GM10248 (cell line): ENCODE measurements at regions of chr3 and their contacts with region 1.

Region 1: GRCh38 chr3:111717601-111718000 is 122.5 kb upstream of the ZBED2 start:
- DNase-seq: peak; percentile 73
- CTCF ChIP-seq: peak; percentile 91

Region 2: GRCh38 chr3:111326144-111326995 is 391.2 kb before region 1 on chr3:
- CTCF ChIA-PET with region 1: no interaction called
- POLR2A ChIA-PET with region 1: no interaction called
- DNase-seq: no peak
- CTCF ChIP-seq: no peak

Region 3: DNA sequence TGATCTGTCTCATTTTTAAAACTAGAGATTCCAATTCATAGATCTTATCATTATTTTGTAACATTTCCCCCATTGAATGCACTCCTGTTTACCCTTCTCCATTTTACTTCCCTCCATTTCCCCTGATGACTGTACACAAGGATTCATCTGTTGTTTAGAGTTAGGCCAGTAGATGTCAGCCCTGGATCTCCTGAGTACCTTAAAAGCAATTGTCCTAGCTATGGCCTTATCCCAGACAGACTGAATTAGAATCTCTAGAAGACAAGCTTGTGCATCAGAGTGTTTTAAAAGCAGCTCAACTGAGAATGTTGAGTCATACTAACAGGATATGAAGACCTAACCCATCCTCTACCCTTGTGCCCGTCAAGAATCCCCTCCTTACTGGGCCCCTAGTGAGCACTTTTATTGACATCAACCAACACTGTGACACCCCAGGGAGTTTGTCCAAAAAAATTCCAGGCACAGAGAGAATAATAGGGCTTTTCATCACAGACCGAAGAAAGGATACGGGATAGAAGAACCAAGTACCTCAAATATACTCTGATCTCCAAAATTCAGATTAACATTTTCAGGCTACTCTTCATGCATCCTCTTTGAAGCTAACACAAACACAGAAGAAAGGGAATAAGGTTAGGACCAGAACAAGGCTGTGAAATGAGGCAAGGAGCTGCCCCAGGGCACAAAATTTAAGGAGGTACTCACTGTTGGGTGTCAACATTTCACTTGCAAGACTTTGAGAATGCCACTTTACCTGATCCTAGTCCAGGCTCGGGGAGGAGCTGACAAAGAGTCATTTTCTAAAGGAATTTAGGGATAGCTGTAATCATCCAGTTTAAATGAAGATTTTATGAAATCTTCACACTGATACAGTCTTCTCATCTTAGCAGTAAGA is 139.6 kb before region 1 on chr3:
- CTCF ChIA-PET with region 1: interaction called, 16 read pairs
- POLR2A ChIA-PET with region 1: no interaction called
- DNase-seq: peak; percentile 28
- CTCF ChIP-seq: peak; percentile 45

Region 4: DNA sequence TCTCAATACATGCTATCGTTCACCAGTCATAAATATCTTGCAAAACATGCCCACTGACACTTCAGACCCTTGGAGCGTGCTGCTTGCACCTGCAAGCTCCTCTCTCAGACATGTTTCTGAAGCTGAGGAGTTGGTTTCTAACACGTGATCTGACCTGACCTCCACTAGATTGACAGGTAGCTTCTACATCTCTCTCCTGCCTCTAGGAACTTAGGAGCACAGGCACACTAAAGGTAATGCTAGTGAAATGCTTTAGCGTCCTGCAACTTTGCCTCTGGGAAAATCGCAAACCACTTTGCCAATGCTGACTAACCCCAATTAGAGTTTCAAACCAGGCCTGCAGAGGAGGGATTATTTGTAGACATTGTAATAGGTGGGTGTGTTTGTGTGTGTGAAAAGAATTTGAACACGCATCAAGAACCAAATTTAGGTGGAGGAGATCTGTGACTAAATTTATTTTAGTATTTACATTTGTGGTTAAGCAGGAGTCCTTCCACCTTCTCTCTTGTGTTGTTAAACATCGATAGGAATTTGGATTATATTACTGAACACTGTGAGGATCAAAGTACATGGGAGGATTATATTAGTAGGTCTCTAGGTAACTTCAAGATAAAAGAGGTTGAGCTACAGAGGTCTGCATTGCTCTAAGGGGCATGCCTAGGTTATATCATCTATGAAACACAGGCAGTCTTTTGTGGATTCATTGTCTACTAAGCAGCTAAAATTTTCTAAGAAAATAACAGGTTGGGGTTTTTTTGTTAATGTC is 35.8 kb before region 1 on chr3:
- CTCF ChIA-PET with region 1: interaction called, 15 read pairs
- POLR2A ChIA-PET with region 1: no interaction called
- DNase-seq: no peak
- CTCF ChIP-seq: no peak

Region 5: DNA sequence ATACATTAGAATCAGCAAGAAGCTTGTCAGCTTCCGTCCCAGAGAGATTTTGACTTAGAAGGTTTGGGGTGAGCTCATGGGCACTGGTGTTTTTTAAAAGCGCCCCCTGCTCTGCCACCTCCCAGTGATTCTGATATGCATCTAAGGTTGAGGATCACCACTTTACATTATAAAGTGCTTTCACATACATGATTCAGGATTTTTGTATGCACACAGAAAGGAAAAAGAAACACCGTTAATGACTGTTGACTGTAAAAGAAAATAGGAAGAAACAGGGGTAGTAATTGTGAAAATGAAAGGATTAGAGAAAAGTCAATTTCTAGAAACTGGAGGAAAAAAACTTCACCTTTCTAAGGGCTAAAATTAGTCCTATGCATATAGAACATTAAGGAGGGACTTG is 17.5 kb before region 1 on chr3:
- CTCF ChIA-PET with region 1: interaction called, 79 read pairs
- POLR2A ChIA-PET with region 1: no interaction called
- DNase-seq: no peak
- CTCF ChIP-seq: no peak

Region 6: GRCh38 chr3:111745786-111746185 is 28.2 kb after region 1 on chr3:
- CTCF ChIA-PET with region 1: interaction called, 23 read pairs
- POLR2A ChIA-PET with region 1: no interaction called
- DNase-seq: no peak
- CTCF ChIP-seq: no peak

Region 7: DNA sequence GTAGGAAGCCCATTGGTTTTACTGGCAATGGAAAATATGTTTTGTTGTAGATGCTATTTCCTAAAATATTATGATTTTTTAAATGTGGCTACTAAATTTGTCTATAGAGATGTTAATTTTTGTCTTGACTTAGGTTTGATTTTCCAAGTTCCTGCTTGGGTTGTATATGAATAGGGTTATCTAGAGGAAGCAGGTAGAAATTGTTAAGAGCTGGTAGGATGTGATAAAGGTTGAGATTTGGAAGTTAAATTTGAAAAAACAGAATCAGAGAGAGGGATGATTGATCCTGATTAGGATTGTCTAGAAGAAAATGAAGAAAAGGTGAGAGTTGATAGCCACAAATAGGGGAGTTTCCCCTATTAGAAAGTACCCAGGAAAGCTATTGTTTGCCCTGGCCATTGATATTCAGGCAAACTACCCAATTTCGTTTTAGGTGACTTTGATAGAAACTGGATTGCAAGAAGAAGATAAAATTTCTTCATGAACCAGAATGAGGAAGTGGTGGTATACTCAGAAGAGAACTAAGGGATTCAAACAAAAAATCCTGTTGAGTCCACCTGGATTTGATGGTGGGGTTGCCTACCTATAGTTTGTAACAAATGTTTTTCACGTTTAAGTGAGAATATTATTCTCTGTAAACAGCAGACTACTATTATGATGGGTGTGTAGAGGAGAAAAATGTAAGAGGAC is 50.3 kb after region 1 on chr3:
- CTCF ChIA-PET with region 1: no interaction called
- POLR2A ChIA-PET with region 1: no interaction called
- DNase-seq: no peak
- CTCF ChIP-seq: no peak

Region 8: GRCh38 chr3:111978493-111979433 is 261.2 kb after region 1 on chr3 and contains the start of gene ABHD10:
- CTCF ChIA-PET with region 1: interaction called, 327 read pairs
- POLR2A ChIA-PET with region 1: no interaction called
- DNase-seq: peak; percentile 92
- CTCF ChIP-seq: no peak

Region 9: DNA sequence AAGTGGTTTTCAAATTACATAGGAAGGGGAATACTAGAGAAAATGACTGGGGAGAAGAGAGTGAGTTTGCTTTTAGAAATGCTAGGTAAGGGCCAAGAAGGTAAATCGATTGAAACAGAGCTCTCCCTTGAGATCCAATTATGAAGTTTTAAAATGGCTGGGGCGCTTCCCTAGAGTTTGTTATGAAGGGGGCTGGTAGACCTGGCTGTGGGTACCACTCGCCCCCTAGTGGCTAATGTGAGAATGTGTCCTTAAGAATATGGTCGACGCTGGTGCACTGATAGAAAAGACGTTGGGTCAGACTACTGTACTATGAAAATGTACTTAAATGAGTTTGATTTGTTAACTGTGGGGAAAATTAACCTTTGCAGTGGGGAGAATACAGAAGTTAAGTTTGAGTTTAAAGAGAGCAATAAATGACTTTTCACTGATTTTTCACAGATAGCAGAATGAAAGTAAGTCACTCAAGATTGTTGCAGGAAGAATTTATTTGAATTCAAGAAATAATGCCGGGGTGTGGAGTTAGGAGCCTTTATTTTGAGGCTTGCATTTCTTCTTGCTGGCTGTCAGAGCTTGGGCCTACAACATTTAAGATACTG is 326.1 kb after region 1 on chr3:
- CTCF ChIA-PET with region 1: interaction called, 27 read pairs
- POLR2A ChIA-PET with region 1: no interaction called
- DNase-seq: peak; percentile 57
- CTCF ChIP-seq: peak; percentile 80